Calu3 (cell line): ENCODE measurements at regions of chr7 and their contacts with region 1.

Region 1: DNA sequence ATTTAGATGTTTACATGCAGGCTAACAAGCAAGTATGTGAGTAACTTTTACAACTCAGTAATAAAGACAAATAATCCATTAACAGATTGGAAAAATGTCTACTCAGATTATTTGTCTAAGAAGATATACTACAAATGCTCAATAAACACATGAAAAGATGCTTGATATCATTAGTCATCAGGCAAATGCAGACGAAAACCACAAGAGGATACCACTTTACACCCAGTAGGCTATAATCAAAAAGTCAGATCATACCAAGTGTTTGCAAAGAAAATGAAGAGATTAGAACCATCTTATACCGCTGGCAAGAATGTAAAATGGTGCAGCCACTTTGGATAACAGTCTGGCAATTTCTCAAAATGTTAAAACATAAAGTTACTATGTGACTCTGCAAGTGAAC is 84.1 kb downstream of the MALSU1 start:
- DNase-seq: no peak
- H3K4me3 Mint-ChIP-seq: no peak overlapping the region
- H3K27ac Mint-ChIP-seq: peak overlapping the region; percentile 19
- H3K4me1 Mint-ChIP-seq: peaks cover 40% of the 10 kb centered on the region
- H3K27me3 Mint-ChIP-seq: no peaks in the 10 kb centered on the region
- CTCF ChIP-seq: no peak

Region 2: DNA sequence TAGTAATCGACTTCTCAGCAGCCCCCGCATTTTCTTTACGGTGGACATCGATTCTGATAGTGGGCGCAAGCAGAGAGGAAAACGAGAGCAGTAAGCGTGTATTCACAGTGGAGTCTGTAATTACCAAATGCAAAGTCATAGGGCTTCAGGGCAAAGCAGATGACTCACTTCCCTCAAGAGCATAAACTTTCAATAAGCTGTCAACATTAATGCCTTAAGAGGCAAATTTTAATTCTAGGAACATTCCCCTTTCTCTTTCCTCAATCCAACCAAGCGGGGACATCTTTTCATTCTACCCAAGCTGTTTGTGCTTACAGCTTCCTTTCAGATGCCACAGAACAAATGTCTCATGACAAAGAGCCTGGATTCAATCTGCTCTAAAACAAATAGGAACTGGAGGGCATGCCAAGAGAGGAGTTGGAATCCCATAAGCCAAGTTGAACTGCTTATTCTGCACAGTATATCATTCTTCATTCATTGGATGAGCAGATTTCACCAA is 35.5 kb before region 1 on chr7:
- CTCF ChIA-PET with region 1: no interaction called
- intact Hi-C with region 1: loop called (anchors 5 kb)
- DNase-seq: peak; percentile 34
- H3K4me3 Mint-ChIP-seq: no peak overlapping the region
- H3K27ac Mint-ChIP-seq: peak overlapping the region; percentile 38
- H3K4me1 Mint-ChIP-seq: peaks cover 46% of the 10 kb centered on the region
- H3K27me3 Mint-ChIP-seq: no peaks in the 10 kb centered on the region
- CTCF ChIP-seq: no peak

Region 3: DNA sequence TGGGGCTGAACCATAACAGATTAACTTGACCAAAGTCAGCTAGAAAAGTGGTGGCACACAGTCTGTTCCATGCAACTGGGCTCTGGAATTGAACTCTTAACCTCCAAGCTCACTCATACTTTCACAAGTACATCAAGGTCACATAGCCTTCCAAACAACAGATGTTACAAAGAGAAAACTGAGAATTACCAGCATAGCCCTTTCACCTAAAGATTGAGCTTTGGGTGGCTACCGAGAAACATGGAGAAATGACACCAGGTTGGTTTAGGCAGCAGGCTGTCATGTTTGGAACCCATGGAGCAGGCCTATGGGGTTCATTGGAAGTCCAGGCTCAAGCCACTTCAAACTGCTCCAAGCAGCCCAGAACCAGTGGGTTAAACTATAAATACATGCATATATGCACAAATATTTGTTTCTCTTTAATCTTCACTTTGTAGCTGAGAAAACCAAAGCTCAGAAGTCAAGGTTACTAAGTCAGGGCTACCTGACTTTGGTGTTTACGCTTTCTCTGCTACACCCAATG is 25.0 kb before region 1 on chr7:
- CTCF ChIA-PET with region 1: no interaction called
- intact Hi-C with region 1: no loop called
- DNase-seq: no peak
- H3K4me3 Mint-ChIP-seq: no peak overlapping the region
- H3K27ac Mint-ChIP-seq: peak overlapping the region; percentile 25
- H3K4me1 Mint-ChIP-seq: peaks cover 39% of the 10 kb centered on the region
- H3K27me3 Mint-ChIP-seq: no peaks in the 10 kb centered on the region
- CTCF ChIP-seq: no peak